Left ventricle myocardium inferior (tissue), 1 donor: ENCODE measurements at regions of chr16 and their contacts with region 1.

Region 1: GRCh38 chr16:77059446-77059845 is 131.5 kb upstream of the MON1B start:
- DNase-seq: no peak
- H3K4me3 ChIP-seq: no peak overlapping the region
- H3K27ac ChIP-seq: no peak overlapping the region
- H3K4me1 ChIP-seq: peaks cover 24% of the 10 kb centered on the region
- H3K27me3 ChIP-seq: no peaks in the 10 kb centered on the region
- CTCF ChIP-seq: no peak

Region 2: DNA sequence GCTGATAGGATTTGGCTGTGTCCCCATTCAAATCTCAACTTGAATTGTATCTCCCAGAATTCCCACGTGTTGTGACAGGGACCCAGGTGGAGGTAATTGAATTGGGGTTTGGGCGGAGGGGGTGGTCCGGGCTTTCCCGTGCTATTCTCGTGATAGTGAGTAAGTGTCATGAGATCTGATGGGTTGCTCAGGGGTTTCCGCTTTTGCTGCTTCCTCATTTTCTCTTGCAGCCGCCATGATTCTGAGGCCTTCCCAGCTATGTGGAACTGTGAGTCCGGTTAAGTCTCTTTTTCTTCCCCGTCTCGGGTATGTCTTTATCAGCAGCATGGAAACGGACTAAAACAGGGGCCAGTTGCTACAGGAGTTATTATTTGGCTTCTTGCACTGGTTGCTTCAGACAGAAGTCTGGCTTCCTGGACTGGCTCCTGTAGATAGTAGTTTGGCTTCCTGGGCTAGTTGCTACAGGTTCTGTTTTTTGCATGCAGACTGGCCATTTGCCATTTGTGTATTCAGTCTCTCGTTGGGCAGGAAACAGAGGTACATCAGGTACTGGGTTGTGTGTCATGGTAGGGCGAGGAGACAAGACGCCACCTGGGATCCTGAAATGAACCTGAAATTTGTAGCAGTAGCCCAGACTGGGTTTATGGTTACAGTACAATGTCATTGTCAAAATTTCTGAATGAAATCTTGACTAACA is 749.7 kb before region 1 on chr16:
- intact Hi-C with region 1: no loop called
- DNase-seq: no peak
- H3K4me3 ChIP-seq: no peak overlapping the region
- H3K27ac ChIP-seq: no peak overlapping the region
- H3K4me1 ChIP-seq: no peaks in the 10 kb centered on the region
- H3K27me3 ChIP-seq: no peaks in the 10 kb centered on the region
- CTCF ChIP-seq: no peak

Region 3: DNA sequence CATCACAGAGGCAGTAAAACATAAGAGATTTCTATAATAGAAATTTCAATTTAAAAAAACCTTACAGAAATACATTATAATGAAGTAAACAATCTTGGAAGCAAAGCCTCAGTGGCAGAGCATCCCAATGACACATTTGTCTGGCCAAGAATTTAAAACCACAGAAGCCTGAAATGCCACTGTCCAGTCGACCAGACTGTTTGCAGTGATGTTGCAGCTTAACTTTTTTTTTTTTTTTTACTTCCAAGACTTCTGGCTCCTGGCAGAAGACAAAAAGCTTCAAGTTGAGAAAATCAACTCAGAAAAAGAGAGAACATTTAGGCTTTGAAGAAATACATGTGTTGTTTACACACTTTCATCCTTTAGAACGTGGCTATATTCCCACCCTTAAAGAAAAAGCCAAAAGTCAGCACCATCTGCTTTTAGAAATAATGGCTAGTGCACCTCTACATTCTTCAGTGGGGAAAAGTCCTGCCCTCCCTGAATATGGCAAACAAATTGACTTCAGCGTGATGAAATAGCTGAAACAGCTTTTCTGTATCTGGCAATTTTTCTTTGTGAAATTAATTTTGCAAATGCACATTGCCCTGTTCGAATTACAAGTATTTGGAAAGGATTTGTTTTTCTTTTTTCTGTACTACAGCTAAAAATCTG is 73.9 kb before region 1 on chr16:
- intact Hi-C with region 1: loop called (anchors 10 kb)
- DNase-seq: no peak
- H3K4me3 ChIP-seq: no peak overlapping the region
- H3K27ac ChIP-seq: no peak overlapping the region
- H3K4me1 ChIP-seq: no peaks in the 10 kb centered on the region
- H3K27me3 ChIP-seq: no peaks in the 10 kb centered on the region
- CTCF ChIP-seq: no peak